IMR-90 (cell line): ENCODE measurements at regions of chr10 and their contacts with region 1.

Region 1: DNA sequence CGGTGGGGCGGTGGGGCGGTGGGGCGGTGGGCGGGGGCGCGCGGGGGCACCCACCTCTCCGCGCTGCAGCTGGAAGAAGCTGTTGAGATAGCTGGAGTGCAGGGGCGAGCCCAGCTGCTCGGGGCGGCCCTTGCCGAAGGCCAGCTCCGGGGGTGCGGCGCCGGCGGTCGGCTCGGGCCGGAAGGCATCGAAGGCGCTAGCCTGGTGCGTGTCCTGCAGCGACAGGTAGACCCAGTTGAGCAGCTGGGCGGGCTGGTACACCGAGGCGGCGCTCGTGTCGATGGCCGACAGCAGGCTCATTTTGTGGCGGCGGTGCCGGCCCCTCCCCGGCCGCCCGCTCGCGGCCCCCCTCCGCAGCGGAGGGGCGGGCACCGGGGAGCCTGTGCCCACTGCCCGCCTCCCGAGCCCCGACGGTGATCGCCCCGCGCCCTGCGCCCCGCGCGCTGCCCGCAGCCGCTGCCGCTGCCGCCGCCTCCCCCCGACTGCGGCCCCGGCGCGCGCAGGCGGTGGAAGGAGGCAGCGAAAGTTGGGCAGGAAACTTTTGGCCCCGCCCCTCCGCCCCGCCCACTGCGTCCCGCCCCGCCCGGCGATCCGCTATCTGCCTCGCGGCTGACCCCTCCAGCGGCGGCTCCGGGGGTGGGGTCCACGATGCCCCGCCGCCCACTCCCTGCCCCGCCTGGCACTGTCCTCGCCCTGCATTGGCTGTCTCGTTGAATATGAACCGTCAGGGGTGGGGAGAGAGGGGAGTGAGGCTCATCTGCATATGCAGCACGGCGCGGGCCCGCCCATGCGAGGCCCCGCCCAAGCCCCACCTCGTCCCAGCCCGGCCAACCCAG is at the start of gene ZCCHC24:
- DNase-seq: peak; percentile 99
- ATAC-seq: peak; percentile 90
- H3K4me3 ChIP-seq: peak within 1 kb of the TSS; percentile 87
- H3K27ac ChIP-seq: peak within 1 kb of the TSS; percentile 92
- H3K4me1 ChIP-seq: peaks cover 31% of the 10 kb centered on the region
- H3K27me3 ChIP-seq: no peaks in the 10 kb centered on the region
- CTCF ChIP-seq: no peak
- POLR2A ChIP-seq: peak; percentile 74; the same call in 1 of the 2 replicates
- RAD21 ChIP-seq: no peak; the same call in 1 of the 2 replicates
- total RNA-seq, gene ZCCHC24: 12.2 and 15.1 TPM in 2 replicates

Region 2: GRCh38 chr10:79331709-79332108 is 113.7 kb before region 1 on chr10:
- CTCF ChIA-PET with region 1: no interaction called
- POLR2A ChIA-PET with region 1: no interaction called
- dilution Hi-C with region 1: no loop called
- in situ Hi-C with region 1: no loop called
- intact Hi-C with region 1: no loop called
- DNase-seq: peak; percentile 97
- ATAC-seq: peak; percentile 46
- H3K4me3 ChIP-seq: no peak overlapping the region
- H3K27ac ChIP-seq: no peak overlapping the region; the same call in 1 of the 2 replicates
- H3K4me1 ChIP-seq: peaks cover 7% of the 10 kb centered on the region; the same call in 1 of the 2 replicates
- H3K27me3 ChIP-seq: no peaks in the 10 kb centered on the region
- CTCF ChIP-seq: no peak
- POLR2A ChIP-seq: peak; percentile 35; the same call in 1 of the 2 replicates
- RAD21 ChIP-seq: no peak

Region 3: GRCh38 chr10:79399223-79399831 is 46.0 kb before region 1 on chr10:
- CTCF ChIA-PET with region 1: no interaction called
- POLR2A ChIA-PET with region 1: no interaction called
- dilution Hi-C with region 1: no loop called
- in situ Hi-C with region 1: no loop called
- intact Hi-C with region 1: loop called (anchors 1 kb)
- DNase-seq: peak; percentile 95
- ATAC-seq: peak; percentile 90
- H3K4me3 ChIP-seq: no peak overlapping the region
- H3K27ac ChIP-seq: peak overlapping the region; percentile 95
- H3K4me1 ChIP-seq: peaks cover 49% of the 10 kb centered on the region
- H3K27me3 ChIP-seq: no peaks in the 10 kb centered on the region
- CTCF ChIP-seq: no peak
- POLR2A ChIP-seq: peak; percentile 85
- RAD21 ChIP-seq: no peak; the same call in 1 of the 2 replicates

Region 4: DNA sequence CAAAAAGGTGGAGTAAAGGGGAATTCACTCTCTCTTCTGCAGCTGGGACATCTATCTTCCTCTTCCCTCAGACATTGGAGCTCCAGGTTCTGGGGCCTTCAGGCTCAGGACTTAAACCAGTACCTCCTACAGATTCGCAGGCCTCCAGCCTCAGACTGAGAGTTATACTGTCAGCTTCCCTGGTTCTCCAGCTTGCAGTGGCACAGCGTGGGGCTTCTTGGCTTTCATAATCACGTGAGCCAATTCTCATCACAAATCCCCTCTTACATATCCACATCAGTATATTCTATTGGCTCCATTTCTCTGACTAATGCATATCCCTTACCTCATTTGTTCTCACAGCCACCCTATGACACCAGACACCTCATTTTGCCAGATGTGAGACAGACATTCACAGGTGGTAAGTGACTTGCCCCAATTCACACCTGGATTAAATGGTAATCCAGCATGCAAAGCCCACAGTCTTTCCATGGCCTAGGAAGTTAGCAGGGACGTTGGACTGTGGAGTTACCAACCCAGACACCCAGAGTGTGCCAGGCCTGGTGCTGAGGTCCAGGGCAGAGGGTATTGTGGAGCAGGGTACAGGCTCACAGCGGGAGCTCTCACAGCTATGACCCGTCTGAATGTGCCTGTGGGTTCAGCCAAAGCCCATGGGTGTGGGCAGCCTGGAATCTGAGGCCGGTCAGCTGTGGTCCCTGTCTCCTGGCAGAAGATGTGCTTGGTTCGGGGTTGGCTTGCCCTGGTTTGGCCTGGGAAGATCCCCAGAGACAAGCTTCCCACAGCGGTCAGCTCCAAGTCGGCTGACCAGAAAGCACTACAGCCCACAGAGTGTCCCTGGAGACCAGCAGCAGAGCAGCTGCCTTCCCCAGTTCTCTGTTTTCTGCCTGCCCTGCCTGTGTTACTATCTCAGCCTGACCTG is 18.5 kb after region 1 on chr10:
- CTCF ChIA-PET with region 1: no interaction called
- POLR2A ChIA-PET with region 1: no interaction called
- dilution Hi-C with region 1: no loop called
- in situ Hi-C with region 1: no loop called
- intact Hi-C with region 1: loop called (anchors 2 kb)
- DNase-seq: no peak
- ATAC-seq: no peak
- H3K4me3 ChIP-seq: no peak overlapping the region
- H3K27ac ChIP-seq: no peak overlapping the region
- H3K4me1 ChIP-seq: peaks cover 11% of the 10 kb centered on the region
- H3K27me3 ChIP-seq: no peaks in the 10 kb centered on the region
- CTCF ChIP-seq: no peak
- POLR2A ChIP-seq: no peak
- RAD21 ChIP-seq: no peak

Region 5: GRCh38 chr10:79487296-79488194 is 42.2 kb after region 1 on chr10:
- CTCF ChIA-PET with region 1: no interaction called
- POLR2A ChIA-PET with region 1: no interaction called
- dilution Hi-C with region 1: no loop called
- in situ Hi-C with region 1: no loop called
- intact Hi-C with region 1: loop called (anchors 2 kb)
- DNase-seq: peak; percentile 66
- ATAC-seq: peak; percentile 46
- H3K4me3 ChIP-seq: no peak overlapping the region
- H3K27ac ChIP-seq: peak overlapping the region; percentile 95
- H3K4me1 ChIP-seq: peaks cover 32% of the 10 kb centered on the region
- H3K27me3 ChIP-seq: no peaks in the 10 kb centered on the region
- CTCF ChIP-seq: peak; percentile 54
- POLR2A ChIP-seq: no peak
- RAD21 ChIP-seq: peak; percentile 64